ENCODE measurements at regions of chr9 and their contacts with region 1.

Region 1: GRCh38 chr9:122912964-122913673 is at the start of gene ZBTB6:
- DNase-seq: peak; percentile 62
- H3K4me3 Mint-ChIP-seq: peak within 1 kb of the TSS; percentile 93
- H3K27ac Mint-ChIP-seq: peak within 1 kb of the TSS; percentile 95
- H3K4me1 Mint-ChIP-seq: peaks cover 24% of the 10 kb centered on the region
- H3K27me3 Mint-ChIP-seq: no peaks in the 10 kb centered on the region
- total RNA-seq, gene ZBTB6: 10.1 and 10.9 TPM in 2 replicates

Region 2: GRCh38 chr9:122888480-122888879 is 24.6 kb before region 1 on chr9:
- intact Hi-C with region 1: no loop called
- DNase-seq: no peak
- H3K4me3 Mint-ChIP-seq: no peak overlapping the region
- H3K27ac Mint-ChIP-seq: no peak overlapping the region
- H3K4me1 Mint-ChIP-seq: no peaks in the 10 kb centered on the region
- H3K27me3 Mint-ChIP-seq: no peaks in the 10 kb centered on the region

Region 3: DNA sequence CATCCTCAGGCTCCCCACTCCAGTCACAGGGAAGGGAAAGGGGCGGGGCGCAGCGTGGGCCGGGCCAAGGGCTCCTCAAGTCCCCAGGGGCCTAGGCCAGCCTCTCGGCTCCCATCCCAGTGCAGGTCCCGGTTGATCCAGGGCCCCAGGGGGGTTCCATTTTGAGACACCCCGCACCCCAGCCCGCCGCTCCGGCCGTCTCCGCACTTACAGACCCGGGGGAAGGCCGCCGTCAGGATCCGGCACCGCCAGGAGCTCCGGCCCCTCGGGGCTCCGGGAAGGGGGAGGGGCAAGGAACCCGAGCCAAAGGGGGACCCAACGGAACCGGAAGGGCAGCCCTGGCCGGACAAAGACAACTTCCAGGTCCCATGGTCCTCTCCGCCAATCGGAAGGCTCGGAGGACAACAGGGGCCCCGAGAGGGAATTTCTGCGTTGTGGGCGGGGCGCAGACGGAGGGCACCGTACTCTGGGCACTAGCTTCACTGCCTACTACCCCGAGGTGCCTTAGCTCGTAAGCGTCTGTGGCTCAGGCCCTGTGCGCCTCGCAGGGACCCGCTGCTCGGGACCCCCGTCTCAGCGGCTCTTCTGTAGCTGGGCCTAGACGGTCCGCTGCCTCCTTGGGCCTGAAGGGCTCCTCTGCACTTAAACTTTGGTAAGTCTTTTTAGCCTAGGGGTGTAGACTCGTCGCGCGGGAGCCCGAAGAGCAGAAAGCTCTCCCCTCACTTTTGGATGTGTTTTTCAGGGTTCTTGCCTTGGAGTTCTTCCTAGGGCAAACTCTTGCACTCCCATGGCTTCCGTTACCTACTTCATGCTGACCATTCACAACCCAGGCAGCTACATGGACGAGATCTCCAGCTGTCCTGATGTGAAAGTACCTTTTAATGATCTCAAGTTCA is 18.4 kb after region 1 on chr9 and contains the start of gene ZBTB26:
- intact Hi-C with region 1: loop called (anchors 1 kb)
- DNase-seq: peak; percentile 79
- H3K4me3 Mint-ChIP-seq: no peak within 1 kb of the TSS
- H3K27ac Mint-ChIP-seq: peak within 1 kb of the TSS; percentile 90
- H3K4me1 Mint-ChIP-seq: peaks cover 11% of the 10 kb centered on the region
- H3K27me3 Mint-ChIP-seq: no peaks in the 10 kb centered on the region
- total RNA-seq, gene ZBTB26: 7.4 and 8.2 TPM in 2 replicates

Measured in activated T-helper 2 cell treated with anti-CD3 and anti-CD28 coated beads, Interferon-gamma antibody, Interleukin-2, Interleukin-4, amounts not matched to agents 10 μg/mL and 5 μg/mL and 100 μg/mL, durations not matched to agents 14 hours and 24 hours and 36 hours (primary cell).